Activated CD4-positive, alpha-beta memory T cell treated with anti-CD3 and anti-CD28 coated beads for 36 hours (primary cell): ENCODE measurements at regions of chr3 and their contacts with region 1.

Region 1: DNA sequence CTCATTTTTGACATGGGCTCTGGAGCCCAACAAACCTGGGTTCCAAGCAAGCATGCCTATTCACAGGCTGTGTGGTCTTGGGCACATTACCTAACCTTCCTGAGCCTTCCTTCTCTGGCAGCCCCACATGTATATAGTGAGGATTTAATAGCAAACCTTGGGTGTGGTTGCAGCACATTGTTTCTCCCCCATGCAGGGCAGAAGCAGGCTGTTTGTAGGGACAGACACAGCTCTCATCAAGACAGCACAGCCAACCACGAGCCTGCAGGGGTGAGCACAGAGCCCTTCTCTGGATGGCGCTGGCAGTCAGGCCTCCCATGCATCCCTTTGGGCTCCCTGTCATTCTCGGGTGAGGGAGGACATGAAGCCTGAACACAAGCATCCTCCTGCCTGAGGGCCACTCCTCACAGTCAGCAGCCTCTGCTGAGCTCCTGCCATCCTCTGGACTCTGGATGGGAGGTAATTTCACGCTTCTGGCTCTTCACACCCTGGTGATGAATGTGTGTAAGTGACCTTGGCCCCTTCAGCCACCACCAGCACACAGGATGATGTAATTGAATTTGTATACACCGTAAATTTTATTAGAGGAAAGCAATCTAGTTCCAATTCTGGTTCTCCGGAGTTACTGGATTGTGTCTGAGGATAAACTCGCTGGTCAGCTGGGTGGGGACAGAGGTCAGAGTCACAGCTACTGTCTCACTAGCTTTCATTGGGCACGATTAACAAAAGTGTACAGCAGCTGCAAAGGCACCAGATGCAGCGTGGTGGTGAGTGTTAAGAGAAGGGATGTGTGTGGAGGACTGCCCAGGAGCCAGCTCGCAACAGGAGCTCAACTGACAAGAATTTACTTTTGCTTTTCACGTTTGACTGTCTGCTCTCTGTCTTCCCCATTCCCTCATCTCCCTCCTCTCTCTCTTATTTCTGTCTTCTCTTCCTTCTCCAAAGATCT is 118.0 kb downstream of the CLSTN2 start:
- DNase-seq: no peak
- H3K4me3 Mint-ChIP-seq: no peak overlapping the region
- H3K27ac Mint-ChIP-seq: no peak overlapping the region
- H3K4me1 Mint-ChIP-seq: no peaks in the 10 kb centered on the region
- H3K27me3 Mint-ChIP-seq: peaks cover 5% of the 10 kb centered on the region

Region 2: DNA sequence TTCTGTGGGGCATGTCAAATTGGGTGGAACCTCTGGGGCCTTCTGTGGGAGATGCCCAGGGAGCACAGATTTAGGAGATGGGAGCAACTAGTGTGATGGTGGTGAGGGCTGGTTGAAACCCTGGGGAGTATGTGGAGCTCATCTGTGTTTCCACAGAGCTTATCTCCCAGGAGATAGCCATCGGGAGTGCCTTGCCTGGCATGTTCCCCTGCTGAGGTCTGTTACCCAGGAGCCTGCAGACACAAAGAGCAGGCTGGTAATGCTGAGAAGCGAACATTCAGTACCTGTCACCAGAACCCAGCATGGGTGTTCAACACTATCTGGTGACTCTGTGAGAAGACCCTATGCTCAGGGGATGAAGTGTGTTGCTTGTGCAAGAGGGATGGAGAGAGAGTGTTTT is 33.1 kb before region 1 on chr3:
- CTCF ChIA-PET with region 1: no interaction called
- POLR2A ChIA-PET with region 1: no interaction called
- intact Hi-C with region 1: loop called (anchors 2 kb)
- DNase-seq: no peak
- H3K4me3 Mint-ChIP-seq: no peak overlapping the region
- H3K27ac Mint-ChIP-seq: no peak overlapping the region
- H3K4me1 Mint-ChIP-seq: no peaks in the 10 kb centered on the region
- H3K27me3 Mint-ChIP-seq: no peaks in the 10 kb centered on the region